ENCODE measurements at regions of chr17 and their contacts with region 1.

Region 1: GRCh38 chr17:48593840-48594537 is 410 bp upstream of the HOXB5 start:
- DNase-seq: peak; percentile 67 to 89 (median 80)
- ATAC-seq: peak; percentile 83
- H3K4me3 ChIP-seq: peak overlapping the region; percentile 56
- H3K4me3 Mint-ChIP-seq: peak overlapping the region; percentile 75 to 88 (median 81)
- H3K27ac ChIP-seq: no peak overlapping the region
- H3K27ac Mint-ChIP-seq: peak overlapping the region in 1 of 9 donors; percentile 16
- H3K4me1 ChIP-seq: peaks cover 37 to 40% of the 10 kb centered on the region in 2 donors
- H3K4me1 Mint-ChIP-seq: peaks cover 34 to 70% (median 51%) of the 10 kb centered on the region in 7 donors
- H3K27me3 ChIP-seq: peaks cover 6 to 54% of the 10 kb centered on the region in 2 donors
- H3K27me3 Mint-ChIP-seq: peaks cover 89 to 97% (median 93%) of the 10 kb centered on the region in 5 donors

Region 2: DNA sequence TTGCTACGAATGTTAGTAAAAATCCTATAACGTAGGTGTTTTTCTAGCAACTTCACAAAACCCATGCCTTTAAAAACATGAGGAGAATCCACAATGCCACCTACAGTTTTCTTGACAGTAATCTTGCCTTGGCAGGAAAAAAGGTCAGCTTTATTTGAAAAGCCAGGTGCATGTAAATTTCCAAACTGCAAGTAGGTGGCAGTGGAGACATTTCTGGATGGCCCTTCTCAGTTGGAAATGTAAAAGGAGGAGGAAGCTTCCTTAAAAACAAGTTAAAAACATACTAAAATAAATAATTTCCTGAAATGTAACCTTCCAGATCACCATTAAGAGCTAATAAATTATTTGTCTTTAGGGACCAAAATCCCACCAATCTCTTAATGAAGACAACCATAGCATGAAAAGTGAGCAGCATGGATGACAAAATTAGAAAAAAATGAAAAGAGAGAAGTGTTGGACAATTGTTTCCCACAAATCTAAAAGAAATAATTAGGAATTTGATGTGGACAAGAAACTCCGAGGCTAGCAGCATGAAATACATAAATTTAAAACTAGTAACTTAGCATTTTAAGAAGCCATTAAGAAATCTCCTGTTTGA is 334.2 kb before region 1 on chr17:
- CTCF ChIA-PET with region 1: interaction called, 4 read pairs
- POLR2A ChIA-PET with region 1: interaction called, 3 read pairs
- intact Hi-C with region 1: loop called (anchors 1 kb)
- DNase-seq: no peak
- ATAC-seq: no peak
- H3K4me3 ChIP-seq: no peak overlapping the region
- H3K4me3 Mint-ChIP-seq: no peak overlapping the region
- H3K27ac ChIP-seq: no peak overlapping the region
- H3K27ac Mint-ChIP-seq: no peak overlapping the region
- H3K4me1 ChIP-seq: no peaks in the 10 kb centered on the region
- H3K4me1 Mint-ChIP-seq: peaks cover 4 to 29% (median 10%) of the 10 kb centered on the region in 7 donors
- H3K27me3 ChIP-seq: no peaks in the 10 kb centered on the region
- H3K27me3 Mint-ChIP-seq: no peaks in the 10 kb centered on the region

Region 3: DNA sequence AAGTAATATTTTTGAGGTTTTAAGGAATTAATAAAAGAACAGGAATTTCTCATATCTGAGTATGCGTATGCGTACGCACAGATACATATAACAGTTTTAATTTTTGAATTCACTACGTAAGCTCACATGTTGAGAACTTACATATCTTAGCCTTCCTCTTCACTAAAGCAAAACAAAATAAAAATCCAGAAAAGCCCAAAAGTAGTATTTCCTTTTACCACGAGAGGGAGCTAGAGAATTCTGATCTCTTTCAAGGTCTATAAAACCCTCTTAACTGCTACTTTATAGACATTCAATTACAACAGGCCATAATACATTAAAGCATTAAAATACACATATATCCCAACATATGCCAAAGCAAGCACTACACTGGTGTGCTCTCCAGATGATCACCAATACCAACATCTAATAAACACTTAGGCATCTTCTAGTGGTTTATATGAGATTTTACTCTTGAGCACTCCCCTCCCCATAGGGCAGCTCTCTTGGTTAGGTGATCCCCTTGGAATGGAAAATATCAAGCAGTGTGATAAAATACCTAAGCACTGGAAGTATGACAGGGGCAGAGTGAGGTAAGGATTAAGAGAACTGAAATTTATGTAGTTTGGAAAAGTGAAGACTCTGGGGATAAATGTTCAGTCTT is 258.0 kb before region 1 on chr17:
- CTCF ChIA-PET with region 1: interaction called, 47 read pairs
- POLR2A ChIA-PET with region 1: interaction called, 4 read pairs
- intact Hi-C with region 1: loop called (anchors 1 kb)
- DNase-seq: peak in 7 of 9 donors; percentile 27 to 70 (median 63)
- ATAC-seq: peak; percentile 77
- H3K4me3 ChIP-seq: no peak overlapping the region
- H3K4me3 Mint-ChIP-seq: no peak overlapping the region
- H3K27ac ChIP-seq: no peak overlapping the region
- H3K27ac Mint-ChIP-seq: peak overlapping the region in 1 of 9 donors; percentile 15
- H3K4me1 ChIP-seq: peaks cover 0 to 3% of the 10 kb centered on the region in 2 donors
- H3K4me1 Mint-ChIP-seq: peaks cover 3 to 25% (median 12%) of the 10 kb centered on the region in 7 donors
- H3K27me3 ChIP-seq: no peaks in the 10 kb centered on the region
- H3K27me3 Mint-ChIP-seq: no peaks in the 10 kb centered on the region

Region 4: DNA sequence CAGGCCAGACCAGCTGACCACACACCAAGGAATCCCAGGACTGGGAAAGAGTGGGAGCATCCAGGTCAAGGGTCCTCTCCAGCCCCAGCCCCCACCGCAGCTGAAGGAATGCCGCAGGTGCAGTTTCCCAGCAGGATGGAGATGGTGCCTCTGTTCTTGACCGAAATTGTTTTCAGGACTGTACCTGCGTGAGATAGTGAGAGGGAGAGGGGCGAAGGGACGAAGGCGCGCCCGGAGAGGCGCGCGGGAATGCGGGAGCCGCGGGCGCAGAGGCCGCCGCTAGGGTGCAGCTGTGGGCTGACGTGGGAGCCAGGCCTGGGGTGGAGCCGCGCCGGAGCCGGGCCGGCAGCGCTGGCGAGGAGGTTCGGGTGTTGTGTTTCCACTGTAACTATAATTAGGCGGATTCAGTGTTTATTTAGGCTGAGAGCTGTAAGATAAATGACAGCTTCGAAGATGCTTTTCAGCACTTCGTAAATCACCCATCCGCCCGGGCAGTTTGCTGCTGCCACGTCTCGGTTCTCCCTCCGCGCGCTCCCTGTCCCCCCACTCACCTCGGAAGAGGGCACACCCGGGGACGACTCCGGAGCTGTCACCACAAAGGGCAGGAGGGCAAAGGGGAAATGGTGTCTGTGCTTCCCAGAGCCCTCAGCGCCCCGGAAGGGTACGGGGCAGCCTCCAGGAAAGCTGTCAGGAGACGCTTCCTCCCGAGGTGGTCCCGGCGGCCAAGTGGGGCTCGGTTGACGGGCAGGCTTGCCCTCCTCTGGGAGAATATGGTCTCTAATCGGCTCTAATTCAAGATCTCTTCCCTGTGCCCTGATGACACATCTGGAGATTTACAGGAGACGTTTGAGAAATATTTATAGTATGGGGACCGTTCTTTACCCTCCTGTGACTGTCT is 101.3 kb before region 1 on chr17:
- CTCF ChIA-PET with region 1: interaction called, 18 read pairs
- POLR2A ChIA-PET with region 1: no interaction called
- intact Hi-C with region 1: loop called in 1 of 2 experiments (anchors 1 kb)
- DNase-seq: peak; percentile 38 to 73 (median 58)
- ATAC-seq: peak; percentile 95
- H3K4me3 ChIP-seq: peak overlapping the region; percentile 54
- H3K4me3 Mint-ChIP-seq: peak overlapping the region; percentile 6 to 79 (median 58)
- H3K27ac ChIP-seq: no peak overlapping the region
- H3K27ac Mint-ChIP-seq: peak overlapping the region in 1 of 9 donors; percentile 88
- H3K4me1 ChIP-seq: peaks cover 6 to 7% of the 10 kb centered on the region in 2 donors
- H3K4me1 Mint-ChIP-seq: peaks cover 0 to 58% (median 7%) of the 10 kb centered on the region in 7 donors
- H3K27me3 ChIP-seq: no peaks in the 10 kb centered on the region
- H3K27me3 Mint-ChIP-seq: peaks cover 6 to 26% (median 16%) of the 10 kb centered on the region in 5 donors

Region 5: GRCh38 chr17:48603959-48604769 is 10.2 kb after region 1 on chr17:
- CTCF ChIA-PET with region 1: no interaction called
- POLR2A ChIA-PET with region 1: no interaction called
- intact Hi-C with region 1: no loop called
- DNase-seq: no peak
- ATAC-seq: no peak
- H3K4me3 ChIP-seq: no peak overlapping the region
- H3K4me3 Mint-ChIP-seq: peak overlapping the region in 3 of 10 donors; percentile 6 to 45 (median 16)
- H3K27ac ChIP-seq: no peak overlapping the region
- H3K27ac Mint-ChIP-seq: no peak overlapping the region
- H3K4me1 ChIP-seq: no peaks in the 10 kb centered on the region
- H3K4me1 Mint-ChIP-seq: peaks cover 0 to 22% (median 8%) of the 10 kb centered on the region in 7 donors
- H3K27me3 ChIP-seq: peaks cover 21 to 31% of the 10 kb centered on the region in 2 donors
- H3K27me3 Mint-ChIP-seq: peaks cover 82 to 91% (median 88%) of the 10 kb centered on the region in 5 donors

Region 6: DNA sequence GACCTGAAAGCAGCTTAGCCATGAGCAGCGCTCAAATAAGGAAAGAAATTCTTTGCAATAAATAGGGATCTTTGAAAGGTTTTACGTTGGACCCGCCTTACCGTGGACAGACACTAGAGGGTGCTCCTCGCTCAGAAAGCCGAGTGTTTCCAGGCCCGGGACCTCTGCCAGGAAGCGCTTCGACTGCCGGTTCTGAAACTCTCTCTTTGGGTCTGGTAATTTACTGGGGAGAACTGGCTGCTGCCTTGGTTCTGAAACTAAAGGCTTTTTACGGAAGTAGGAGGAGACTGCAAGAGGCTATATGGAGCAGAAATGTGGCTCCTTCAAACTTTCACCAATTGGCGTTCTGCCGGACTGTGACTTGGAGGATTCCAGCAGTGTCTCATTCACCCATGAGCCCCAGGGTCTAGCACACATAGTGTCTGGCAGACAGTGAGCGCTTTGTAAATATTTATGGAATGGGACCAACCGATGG is 77.7 kb after region 1 on chr17:
- CTCF ChIA-PET with region 1: no interaction called
- POLR2A ChIA-PET with region 1: no interaction called
- intact Hi-C with region 1: no loop called
- DNase-seq: peak; percentile 42 to 70 (median 60)
- ATAC-seq: peak; percentile 90
- H3K4me3 ChIP-seq: no peak overlapping the region
- H3K4me3 Mint-ChIP-seq: peak overlapping the region in 8 of 10 donors; percentile 16 to 62 (median 54)
- H3K27ac ChIP-seq: no peak overlapping the region
- H3K27ac Mint-ChIP-seq: no peak overlapping the region
- H3K4me1 ChIP-seq: no peaks in the 10 kb centered on the region
- H3K4me1 Mint-ChIP-seq: peaks cover 0 to 7% (median 5%) of the 10 kb centered on the region in 7 donors
- H3K27me3 ChIP-seq: no peaks in the 10 kb centered on the region
- H3K27me3 Mint-ChIP-seq: peaks cover 28 to 54% (median 42%) of the 10 kb centered on the region in 5 donors

Measured in naive thymus-derived CD4-positive, alpha-beta T cell (primary cell).